AG04449 (cell line): ENCODE measurements at regions of chr12 and their contacts with region 1.

Region 1: GRCh38 chr12:57632694-57633477 is at the start of gene B4GALNT1:
- DNase-seq: no peak
- H3K4me3 ChIP-seq: peak within 1 kb of the TSS; percentile 67
- CTCF ChIP-seq: peak; percentile 93

Region 2: DNA sequence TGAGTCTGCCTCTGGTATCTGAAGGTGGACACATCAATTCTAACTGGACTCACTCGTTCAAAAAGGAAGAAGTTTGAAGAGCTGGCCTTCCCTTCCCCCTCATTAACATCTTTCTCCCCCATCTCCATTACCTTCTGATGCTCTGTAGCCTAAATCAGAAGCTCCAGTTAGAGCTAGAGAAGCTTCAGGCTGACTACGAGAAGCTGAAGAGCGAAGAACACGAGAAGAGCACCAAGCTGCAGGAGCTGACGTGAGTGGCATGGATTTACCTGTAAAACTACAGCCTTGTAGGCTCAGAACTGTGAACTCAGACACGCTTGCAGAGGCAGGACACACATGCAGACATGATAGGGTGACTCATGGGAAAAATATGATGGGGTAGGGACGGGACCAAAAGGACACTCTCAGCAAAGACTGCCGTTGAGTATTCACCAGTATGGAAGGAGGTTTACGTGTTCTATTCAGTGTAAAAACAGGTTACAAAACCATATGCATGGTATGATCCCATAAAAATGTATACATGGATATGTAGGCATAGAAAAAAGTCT is 56.2 kb before region 1 on chr12:
- CTCF ChIA-PET with region 1: interaction called, 159 read pairs
- POLR2A ChIA-PET with region 1: no interaction called
- DNase-seq: no peak
- H3K4me3 ChIP-seq: no peak overlapping the region
- CTCF ChIP-seq: no peak

Region 3: GRCh38 chr12:57661376-57661775 is 28.5 kb after region 1 on chr12:
- CTCF ChIA-PET with region 1: interaction called, 10 read pairs
- POLR2A ChIA-PET with region 1: no interaction called
- DNase-seq: no peak
- H3K4me3 ChIP-seq: no peak overlapping the region
- CTCF ChIP-seq: no peak